T-cell (primary cell): ENCODE measurements at regions of chr5 and their contacts with region 1.

Region 1: GRCh38 chr5:65037845-65038815 is 269.4 kb downstream of the CWC27 start:
- DNase-seq: peak in 10 of 35 experiments; percentile 3 to 56 (median 16)
- ATAC-seq: no peak
- H3K4me3 ChIP-seq: no peak overlapping the region
- H3K4me3 Mint-ChIP-seq: peak overlapping the region in 2 of 3 donors; percentile 37 to 67
- H3K27ac ChIP-seq: peak overlapping the region; percentile 92
- H3K27ac Mint-ChIP-seq: peak overlapping the region; percentile 86 to 96
- H3K4me1 ChIP-seq: peaks cover 20 to 27% of the 10 kb centered on the region in 2 experiments
- H3K4me1 Mint-ChIP-seq: peaks cover 25 to 39% (median 32%) of the 10 kb centered on the region in 3 donors
- H3K27me3 ChIP-seq: no peaks in the 10 kb centered on the region
- H3K27me3 Mint-ChIP-seq: no peaks in the 10 kb centered on the region

Region 2: GRCh38 chr5:65630981-65631380 is 592.9 kb after region 1 on chr5:
- CTCF ChIA-PET with region 1: no interaction called
- POLR2A ChIA-PET with region 1: interaction called in 1 of 2 experiments, 11 read pairs
- DNase-seq: no peak
- ATAC-seq: no peak
- H3K4me3 ChIP-seq: no peak overlapping the region
- H3K4me3 Mint-ChIP-seq: no peak overlapping the region
- H3K27ac ChIP-seq: no peak overlapping the region
- H3K27ac Mint-ChIP-seq: no peak overlapping the region
- H3K4me1 ChIP-seq: peaks cover 1 to 3% of the 10 kb centered on the region in 2 experiments
- H3K4me1 Mint-ChIP-seq: peaks cover 23 to 26% (median 25%) of the 10 kb centered on the region in 3 donors
- H3K27me3 ChIP-seq: no peaks in the 10 kb centered on the region
- H3K27me3 Mint-ChIP-seq: no peaks in the 10 kb centered on the region